Endothelial cell of umbilical vein (primary cell): ENCODE measurements at regions of chr3 and their contacts with region 1.

Region 1: DNA sequence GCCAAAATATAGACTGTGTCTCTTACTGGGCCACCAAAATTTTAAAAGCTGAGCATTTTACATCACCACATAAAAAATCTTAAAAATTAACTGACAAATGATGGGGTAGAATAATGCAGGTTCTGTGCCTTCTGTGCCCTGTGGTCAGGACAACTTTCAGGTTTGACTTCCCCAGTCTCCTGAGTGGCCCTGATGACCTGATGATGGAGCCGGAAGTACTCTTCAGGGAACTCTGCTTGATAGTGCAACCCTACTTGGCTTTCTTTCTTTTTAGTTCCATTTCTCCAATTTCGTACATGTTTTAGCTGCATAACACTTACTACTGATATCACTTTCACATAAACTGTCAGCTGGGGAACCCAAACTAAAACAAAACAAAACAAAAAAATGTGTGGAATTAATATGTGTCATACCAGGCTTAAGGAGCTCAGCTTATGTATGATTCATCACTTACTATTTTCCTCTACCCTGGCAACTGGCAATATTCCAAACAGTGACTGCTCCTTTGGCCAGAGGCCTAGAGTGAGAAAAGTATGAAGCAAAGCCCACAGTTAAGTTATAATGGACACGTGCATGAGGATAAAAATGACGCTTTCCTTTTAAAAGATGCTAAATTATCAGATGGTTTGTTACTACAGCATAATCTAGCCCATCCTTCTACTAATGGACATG is 194.3 kb downstream of the BCHE start:
- DNase-seq: peak; percentile 96
- H3K4me3 ChIP-seq: no peak overlapping the region
- H3K27ac ChIP-seq: peak overlapping the region; percentile 89
- H3K4me1 ChIP-seq: peaks cover 25% of the 10 kb centered on the region
- H3K27me3 ChIP-seq: peaks cover 0 to 9% of the 10 kb centered on the region in 2 experiments
- CTCF ChIP-seq: no peak
- POLR2A ChIP-seq: no peak

Region 2: DNA sequence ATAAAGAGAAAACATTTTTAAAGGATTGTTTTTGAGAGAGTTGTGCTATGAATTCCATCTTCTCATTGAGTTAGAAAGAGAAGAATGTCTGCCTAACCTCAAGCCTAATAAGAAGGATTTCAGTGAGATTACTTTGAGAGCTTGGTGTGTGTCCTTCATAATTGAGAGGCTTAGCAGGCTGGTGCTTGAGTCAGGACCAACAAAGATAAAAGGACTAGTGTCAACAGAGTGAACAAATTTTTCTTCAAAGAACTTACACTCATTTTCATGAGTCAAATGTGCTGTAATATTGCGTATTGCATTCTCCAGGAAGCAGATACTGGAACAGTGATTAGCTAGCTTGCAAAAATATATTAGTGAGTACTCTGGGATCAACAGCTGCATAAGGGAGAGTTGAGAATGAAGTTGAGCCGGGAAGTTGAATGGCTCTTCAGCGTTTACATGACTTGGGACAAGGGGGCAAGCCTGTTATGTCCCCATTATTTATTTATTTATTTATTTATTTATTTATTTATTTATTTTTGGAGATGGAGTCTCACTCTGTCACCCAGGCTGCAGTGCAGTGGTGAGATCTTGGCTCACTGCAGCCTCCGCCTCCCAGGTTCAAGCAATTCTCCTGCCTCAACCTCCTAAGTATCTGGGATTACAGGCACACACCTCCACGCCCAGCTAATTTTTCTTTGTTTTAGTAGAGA is 409.2 kb before region 1 on chr3:
- CTCF ChIA-PET with region 1: no interaction called
- POLR2A ChIA-PET with region 1: no interaction called
- dilution Hi-C with region 1: no loop called
- intact Hi-C with region 1: no loop called
- DNase-seq: no peak
- H3K4me3 ChIP-seq: no peak overlapping the region
- H3K27ac ChIP-seq: no peak overlapping the region
- H3K4me1 ChIP-seq: no peaks in the 10 kb centered on the region
- H3K27me3 ChIP-seq: no peaks in the 10 kb centered on the region
- CTCF ChIP-seq: no peak
- POLR2A ChIP-seq: no peak

Region 3: DNA sequence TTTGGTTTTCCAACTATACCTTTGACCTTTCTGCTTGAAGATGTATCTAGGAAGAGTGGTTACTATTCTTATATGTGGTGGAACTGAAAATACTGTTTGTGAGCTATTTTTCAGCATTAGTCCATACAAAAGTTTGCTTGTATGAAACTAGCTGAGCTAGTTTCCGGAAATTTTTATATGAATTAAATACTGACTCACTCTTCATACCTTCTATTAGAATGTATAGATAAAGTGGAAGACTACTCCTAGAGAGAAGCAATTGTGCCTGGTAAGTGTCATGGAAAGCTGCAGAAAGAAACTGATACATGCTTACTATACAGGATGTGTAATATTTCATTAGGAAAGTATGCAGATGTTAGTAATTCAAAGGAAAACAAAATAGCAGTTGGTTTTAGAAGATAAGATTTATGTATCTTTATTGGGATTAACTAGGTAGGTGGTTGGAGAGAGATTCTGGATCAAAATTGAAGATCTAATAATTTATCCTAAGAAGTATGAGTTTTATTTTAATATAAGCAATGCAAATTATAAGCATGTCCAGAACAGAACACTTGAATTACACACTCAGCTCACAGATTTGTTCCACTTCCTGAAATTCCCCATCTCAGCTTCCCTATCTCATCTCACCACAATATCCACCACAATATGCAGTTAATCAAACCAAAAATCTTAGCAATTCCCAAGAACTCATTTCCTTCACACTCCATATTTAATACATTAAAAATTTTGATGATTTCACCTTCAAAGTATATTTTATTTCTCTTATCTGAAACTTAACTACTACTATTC is 111.5 kb after region 1 on chr3:
- CTCF ChIA-PET with region 1: interaction called, 4 read pairs
- POLR2A ChIA-PET with region 1: no interaction called
- dilution Hi-C with region 1: no loop called
- intact Hi-C with region 1: loop called (anchors 2 kb)
- DNase-seq: peak; percentile 30
- H3K4me3 ChIP-seq: no peak overlapping the region
- H3K27ac ChIP-seq: no peak overlapping the region
- H3K4me1 ChIP-seq: peaks cover 3% of the 10 kb centered on the region
- H3K27me3 ChIP-seq: no peaks in the 10 kb centered on the region
- CTCF ChIP-seq: no peak
- POLR2A ChIP-seq: no peak

Region 4: GRCh38 chr3:165837058-165837525 is 194.2 kb after region 1 on chr3 and contains the start of gene BCHE:
- CTCF ChIA-PET with region 1: no interaction called
- POLR2A ChIA-PET with region 1: no interaction called
- dilution Hi-C with region 1: no loop called
- intact Hi-C with region 1: loop called (anchors 5 kb)
- DNase-seq: peak; percentile 78
- H3K4me3 ChIP-seq: peak within 1 kb of the TSS; percentile 5 to 43 (median 17)
- H3K27ac ChIP-seq: no peak within 1 kb of the TSS
- H3K4me1 ChIP-seq: no peaks in the 10 kb centered on the region
- H3K27me3 ChIP-seq: no peaks in the 10 kb centered on the region
- CTCF ChIP-seq: no peak
- POLR2A ChIP-seq: no peak
- total RNA-seq, gene BCHE: 0.27 and 2.4 TPM in 2 replicates

Region 5: DNA sequence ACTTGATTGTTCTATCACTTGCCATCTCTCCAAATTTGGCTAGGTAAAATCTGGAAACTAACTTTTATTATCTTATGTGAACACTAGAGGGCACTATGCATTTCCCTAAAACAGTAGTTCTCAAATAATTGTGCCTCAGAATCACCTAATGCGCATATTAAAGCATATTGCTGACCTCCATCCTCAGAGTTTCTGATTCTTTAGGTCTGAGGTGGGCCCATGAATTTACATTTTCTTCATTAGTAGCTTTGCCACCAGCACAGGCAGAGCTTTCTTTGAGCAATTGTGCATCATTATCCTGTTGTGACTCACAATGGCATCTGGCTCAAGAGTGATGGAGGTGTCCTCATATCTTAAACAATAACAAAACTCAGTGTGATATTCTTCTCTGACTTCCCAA is 211.8 kb after region 1 on chr3:
- CTCF ChIA-PET with region 1: interaction called, 3 read pairs
- POLR2A ChIA-PET with region 1: no interaction called
- dilution Hi-C with region 1: no loop called
- intact Hi-C with region 1: loop called (anchors 2 kb)
- DNase-seq: peak; percentile 36
- H3K4me3 ChIP-seq: no peak overlapping the region
- H3K27ac ChIP-seq: no peak overlapping the region
- H3K4me1 ChIP-seq: peaks cover 3% of the 10 kb centered on the region
- H3K27me3 ChIP-seq: no peaks in the 10 kb centered on the region
- CTCF ChIP-seq: peak; percentile 22 to 36
- POLR2A ChIP-seq: no peak